ENCODE measurements at regions of chr14 and their contacts with region 1.

Region 1: GRCh38 chr14:50311975-50312733 is at the starts of genes DMAC2L and L2HGDH:
- DNase-seq: peak; percentile 91
- ATAC-seq: peak; percentile 94
- H3K4me3 Mint-ChIP-seq: peak within 1 kb of the TSS; percentile 93
- H3K27ac Mint-ChIP-seq: peak within 1 kb of the TSS; percentile 98
- H3K4me1 Mint-ChIP-seq: peaks cover 34% of the 10 kb centered on the region
- H3K27me3 Mint-ChIP-seq: no peaks in the 10 kb centered on the region
- CTCF ChIP-seq: no peak
- total RNA-seq, gene DMAC2L: 31.2 and 32.2 TPM in 2 replicates
- total RNA-seq, gene L2HGDH: 4.3 and 5.2 TPM in 2 replicates

Region 2: GRCh38 chr14:49598485-49599300 is 713.5 kb before region 1 on chr14 and contains the start of gene LRR1:
- CTCF ChIA-PET with region 1: no interaction called
- POLR2A ChIA-PET with region 1: interaction called, 5 read pairs
- intact Hi-C with region 1: loop called (anchors 1 kb)
- DNase-seq: peak; percentile 94
- ATAC-seq: peak; percentile 67
- H3K4me3 Mint-ChIP-seq: peak within 1 kb of the TSS; percentile 95
- H3K27ac Mint-ChIP-seq: peak within 1 kb of the TSS; percentile 96
- H3K4me1 Mint-ChIP-seq: peaks cover 60% of the 10 kb centered on the region
- H3K27me3 Mint-ChIP-seq: no peaks in the 10 kb centered on the region
- CTCF ChIP-seq: no peak
- total RNA-seq, gene LRR1: 15.1 and 19.9 TPM in 2 replicates

Region 3: GRCh38 chr14:49692811-49693734 is 619.1 kb before region 1 on chr14 and contains the start of gene KLHDC1:
- CTCF ChIA-PET with region 1: no interaction called
- POLR2A ChIA-PET with region 1: interaction called, 3 read pairs
- intact Hi-C with region 1: loop called (anchors 5 kb)
- DNase-seq: peak; percentile 74
- ATAC-seq: peak; percentile 80
- H3K4me3 Mint-ChIP-seq: peak within 1 kb of the TSS; percentile 83
- H3K27ac Mint-ChIP-seq: peak within 1 kb of the TSS; percentile 84
- H3K4me1 Mint-ChIP-seq: peaks cover 24% of the 10 kb centered on the region
- H3K27me3 Mint-ChIP-seq: no peaks in the 10 kb centered on the region
- CTCF ChIP-seq: no peak
- total RNA-seq, gene KLHDC1: 5.7 and 6.9 TPM in 2 replicates

Region 4: DNA sequence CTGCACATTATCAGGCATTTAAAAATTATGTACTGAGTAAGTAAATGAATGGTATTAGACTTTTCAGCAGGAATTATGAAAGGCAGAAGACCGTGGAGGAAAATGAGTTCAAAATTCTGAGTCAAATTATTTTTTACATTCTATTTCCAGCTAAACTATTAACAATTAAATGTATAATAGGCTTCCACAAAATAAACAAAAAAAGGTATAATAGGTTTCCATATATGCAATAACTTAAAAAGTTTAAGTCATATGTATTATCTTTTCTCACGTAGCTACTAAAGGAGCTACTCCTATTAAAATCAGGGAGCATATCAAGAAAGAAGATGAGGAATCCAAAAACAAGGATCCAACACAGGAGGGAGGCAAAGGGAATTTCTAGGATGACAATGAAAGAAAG is 184.4 kb before region 1 on chr14:
- CTCF ChIA-PET with region 1: no interaction called
- POLR2A ChIA-PET with region 1: interaction called, 10 read pairs
- intact Hi-C with region 1: no loop called
- DNase-seq: no peak
- ATAC-seq: no peak
- H3K4me3 Mint-ChIP-seq: no peak overlapping the region
- H3K27ac Mint-ChIP-seq: no peak overlapping the region
- H3K4me1 Mint-ChIP-seq: no peaks in the 10 kb centered on the region
- H3K27me3 Mint-ChIP-seq: no peaks in the 10 kb centered on the region
- CTCF ChIP-seq: no peak

Region 5: GRCh38 chr14:50363714-50364111 is 51.6 kb after region 1 on chr14:
- CTCF ChIA-PET with region 1: no interaction called
- POLR2A ChIA-PET with region 1: interaction called, 13 read pairs
- intact Hi-C with region 1: loop called (anchors 2 kb)
- DNase-seq: peak; percentile 27
- ATAC-seq: peak; percentile 99
- H3K4me3 Mint-ChIP-seq: peak overlapping the region; percentile 84
- H3K27ac Mint-ChIP-seq: peak overlapping the region; percentile 97
- H3K4me1 Mint-ChIP-seq: peaks cover 44% of the 10 kb centered on the region
- H3K27me3 Mint-ChIP-seq: no peaks in the 10 kb centered on the region
- CTCF ChIP-seq: no peak

Region 6: DNA sequence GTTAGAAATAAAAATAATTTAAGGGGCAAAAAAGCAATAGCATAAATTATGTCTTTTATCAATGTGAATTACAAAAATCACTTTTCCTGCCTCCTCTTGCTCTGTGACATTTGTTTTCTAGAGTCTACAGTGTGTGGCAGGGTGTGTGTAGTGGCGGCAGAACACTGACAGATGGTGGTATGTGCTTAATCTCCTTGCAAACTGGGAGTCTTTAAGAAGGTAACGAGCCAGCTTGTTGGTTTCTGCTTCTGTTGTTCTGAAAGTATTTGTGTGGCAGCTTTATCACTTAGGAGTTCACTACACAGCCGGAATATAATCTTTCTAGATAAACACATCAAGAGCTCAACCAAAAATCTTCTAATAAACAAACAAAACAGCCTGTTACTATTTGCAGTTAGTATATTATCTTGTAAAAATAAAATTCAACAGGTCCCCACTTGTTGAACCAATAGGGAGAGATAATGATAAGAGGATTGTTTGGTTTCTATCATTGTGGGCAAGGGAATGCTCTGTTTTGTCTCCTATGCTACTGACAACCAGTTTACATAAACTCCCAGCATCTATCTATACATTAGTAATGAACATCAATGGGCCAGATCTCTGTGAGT is 71.6 kb after region 1 on chr14:
- CTCF ChIA-PET with region 1: no interaction called
- POLR2A ChIA-PET with region 1: no interaction called
- intact Hi-C with region 1: no loop called
- DNase-seq: no peak
- ATAC-seq: no peak
- H3K4me3 Mint-ChIP-seq: no peak overlapping the region
- H3K27ac Mint-ChIP-seq: no peak overlapping the region
- H3K4me1 Mint-ChIP-seq: no peaks in the 10 kb centered on the region
- H3K27me3 Mint-ChIP-seq: no peaks in the 10 kb centered on the region
- CTCF ChIP-seq: no peak

Region 7: GRCh38 chr14:50830932-50831725 is 519.0 kb after region 1 on chr14 and contains the start of gene NIN:
- CTCF ChIA-PET with region 1: no interaction called
- POLR2A ChIA-PET with region 1: interaction called, 5 read pairs
- intact Hi-C with region 1: loop called (anchors 5 kb)
- DNase-seq: peak; percentile 81
- ATAC-seq: peak; percentile 83
- H3K4me3 Mint-ChIP-seq: peak within 1 kb of the TSS; percentile 98
- H3K27ac Mint-ChIP-seq: peak within 1 kb of the TSS; percentile 98
- H3K4me1 Mint-ChIP-seq: peaks cover 72% of the 10 kb centered on the region
- H3K27me3 Mint-ChIP-seq: no peaks in the 10 kb centered on the region
- CTCF ChIP-seq: no peak
- total RNA-seq, gene NIN: 145 and 156 TPM in 2 replicates

Region 8: GRCh38 chr14:51351997-51352396 is 1039.8 kb after region 1 on chr14:
- CTCF ChIA-PET with region 1: no interaction called
- POLR2A ChIA-PET with region 1: no interaction called
- intact Hi-C with region 1: no loop called
- DNase-seq: no peak
- ATAC-seq: no peak
- H3K4me3 Mint-ChIP-seq: no peak overlapping the region
- H3K27ac Mint-ChIP-seq: no peak overlapping the region
- H3K4me1 Mint-ChIP-seq: no peaks in the 10 kb centered on the region
- H3K27me3 Mint-ChIP-seq: peaks cover 5% of the 10 kb centered on the region
- CTCF ChIP-seq: no peak

Region 9: GRCh38 chr14:51395361-51395849 is 1083.3 kb after region 1 on chr14:
- CTCF ChIA-PET with region 1: no interaction called
- POLR2A ChIA-PET with region 1: no interaction called
- intact Hi-C with region 1: no loop called
- DNase-seq: no peak
- ATAC-seq: no peak
- H3K4me3 Mint-ChIP-seq: no peak overlapping the region
- H3K27ac Mint-ChIP-seq: no peak overlapping the region
- H3K4me1 Mint-ChIP-seq: no peaks in the 10 kb centered on the region
- H3K27me3 Mint-ChIP-seq: peaks cover 3% of the 10 kb centered on the region
- CTCF ChIP-seq: no peak

Measured in activated B cell treated with CpG ODN at 0.5 μM for 24 hours (primary cell).